GM13977 (cell line): ENCODE measurements at regions of chr2 and their contacts with region 1.

Region 1: GRCh38 chr2:26745609-26746327 is 18.3 kb upstream of the SLC35F6 start:
- DNase-seq: peak; percentile 76
- CTCF ChIP-seq: peak; percentile 91

Region 2: DNA sequence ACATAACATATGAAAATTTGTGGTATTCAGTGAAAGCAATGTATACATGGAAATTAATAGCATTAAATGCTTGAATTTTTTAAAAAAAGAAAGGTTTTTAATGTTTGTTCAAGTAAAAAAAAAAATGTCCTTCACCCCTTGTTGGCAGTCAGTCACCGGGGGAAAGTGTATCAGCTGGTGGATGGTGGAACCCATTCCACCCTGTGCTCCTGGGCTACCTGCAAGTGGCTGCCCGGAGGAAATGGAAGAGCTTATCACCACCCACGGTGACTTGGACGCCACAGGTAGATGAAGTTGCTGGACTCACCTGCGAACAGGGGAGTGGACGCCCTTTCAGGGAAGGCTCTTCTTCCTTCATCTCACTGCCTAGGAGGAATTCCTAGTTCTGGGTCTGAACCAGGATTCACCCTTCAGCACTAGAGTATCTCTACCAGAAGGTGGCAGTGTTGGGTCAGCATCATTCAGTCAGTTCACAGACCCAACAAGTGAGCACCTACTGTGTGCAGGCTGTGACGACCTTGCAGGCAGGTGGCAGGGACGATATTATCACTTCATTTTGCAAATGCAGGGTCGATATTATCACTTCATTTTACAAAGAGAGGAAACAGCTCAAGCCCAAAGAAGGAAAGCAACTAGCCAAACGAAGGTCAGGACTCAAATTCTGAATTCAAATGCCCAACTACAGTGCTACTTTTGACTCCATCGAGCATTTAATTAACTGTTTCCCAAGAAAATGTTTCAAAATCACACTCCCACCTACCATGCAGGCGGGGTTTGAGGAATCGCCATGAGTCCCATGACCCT is 140.4 kb before region 1 on chr2:
- in situ Hi-C with region 1: loop called (anchors 10 kb)
- DNase-seq: peak; percentile 60
- CTCF ChIP-seq: peak; percentile 75

Region 3: DNA sequence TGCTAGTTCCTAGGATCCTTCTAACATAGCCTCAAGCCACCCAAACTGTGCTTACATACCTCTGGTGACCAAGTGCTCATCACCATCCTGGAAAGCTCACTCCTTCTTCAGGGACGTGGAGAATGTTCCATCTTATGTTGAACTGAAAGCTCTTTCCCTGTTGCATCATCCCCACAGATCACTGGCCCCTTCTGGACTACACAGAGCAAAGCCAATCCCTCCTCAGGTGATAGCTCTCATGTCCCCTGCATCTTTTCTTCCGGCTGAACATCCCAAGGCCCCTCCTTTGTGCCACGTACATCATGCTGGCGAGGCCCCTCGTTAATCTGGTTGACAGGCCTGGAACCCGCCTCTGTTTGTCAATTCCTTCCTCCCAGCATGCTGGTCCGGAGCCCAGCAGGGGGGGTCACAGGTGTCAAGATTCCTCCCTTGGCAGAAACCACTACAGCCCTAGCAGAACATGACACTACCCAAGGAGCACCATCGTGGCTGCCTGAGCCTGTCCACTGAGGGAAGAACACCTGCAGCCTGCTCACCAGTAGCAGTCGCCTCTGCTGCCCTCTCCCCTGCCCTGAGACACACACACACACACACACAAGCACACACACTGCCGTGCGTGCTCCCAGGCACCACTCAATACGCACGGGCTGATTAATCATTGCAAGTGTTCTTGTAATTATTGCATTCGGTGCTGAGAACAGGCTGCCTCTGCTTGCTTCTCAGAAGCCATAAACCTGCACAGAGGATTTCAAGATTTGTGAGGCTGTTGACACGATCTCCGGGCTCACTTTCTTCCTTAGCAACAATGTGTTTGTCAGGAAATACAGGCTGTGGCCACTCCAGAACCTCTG is 59.6 kb before region 1 on chr2:
- in situ Hi-C with region 1: no loop called
- DNase-seq: no peak
- CTCF ChIP-seq: no peak

Region 4: DNA sequence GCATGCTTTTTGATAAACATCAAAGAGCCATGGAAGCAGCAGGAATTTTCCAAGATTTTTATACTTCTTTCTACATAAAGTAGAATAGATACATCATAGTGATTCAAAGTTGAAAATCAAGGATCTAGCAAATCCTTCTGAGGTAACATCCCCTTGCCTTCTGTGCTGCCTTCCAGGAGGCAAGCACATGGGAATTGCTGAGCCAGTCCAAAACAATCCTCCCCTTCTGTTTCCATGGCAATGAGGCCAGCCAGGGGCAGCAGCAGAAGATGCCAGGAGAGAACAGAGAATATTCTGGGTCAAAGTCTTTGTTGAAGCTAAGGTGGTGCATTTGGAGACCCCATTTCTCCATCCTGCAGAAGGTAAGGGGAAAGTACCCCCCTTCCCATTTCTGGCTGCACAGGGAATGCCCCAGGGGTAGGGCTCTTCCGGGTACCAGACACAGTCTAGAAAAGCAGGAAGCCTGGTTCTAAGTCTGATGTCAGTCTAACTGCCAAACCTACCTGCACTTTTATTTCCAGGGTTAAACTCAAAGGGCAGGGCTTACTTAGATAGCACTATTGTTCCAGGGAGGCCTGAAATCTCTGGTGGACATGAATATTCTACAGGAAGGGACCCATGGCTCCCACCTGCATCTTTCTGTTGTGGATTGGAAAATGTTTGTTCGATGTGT is 62.2 kb after region 1 on chr2:
- in situ Hi-C with region 1: no loop called
- DNase-seq: no peak
- CTCF ChIP-seq: no peak